Right cardiac atrium (tissue), 5 donors: ENCODE measurements at regions of chr12 and their contacts with region 1.

Region 1: DNA sequence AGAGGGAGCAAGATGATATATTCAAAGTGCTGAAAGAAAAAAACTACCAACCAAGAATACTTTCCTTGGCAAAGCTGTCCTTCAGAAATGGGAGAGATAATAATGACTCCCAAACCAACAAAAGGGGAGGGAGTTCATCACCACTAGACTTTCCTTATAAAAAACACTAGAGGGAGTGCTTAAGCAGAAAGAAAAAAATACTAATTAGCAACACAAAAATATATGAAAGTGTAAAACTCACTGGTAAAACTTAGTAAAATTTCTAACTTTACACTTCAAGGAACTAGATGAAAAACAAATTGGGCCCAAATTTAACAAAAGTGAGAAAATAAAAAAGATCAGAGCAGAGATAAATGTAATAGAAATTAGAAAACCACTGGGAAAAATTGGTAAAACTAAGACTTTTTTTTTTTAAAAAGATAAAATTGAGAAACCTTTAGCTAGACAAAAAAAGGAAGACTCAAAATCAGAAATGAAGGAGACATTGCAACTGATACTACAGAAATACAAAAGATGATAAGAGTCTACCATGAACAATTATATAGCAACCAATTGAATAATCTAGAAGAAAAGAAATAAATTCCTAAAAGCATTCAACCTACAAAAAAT is 60.4 kb upstream of the FAR2 start:
- DNase-seq: no peak
- ATAC-seq: no peak
- H3K4me3 ChIP-seq: no peak overlapping the region
- H3K27ac ChIP-seq: no peak overlapping the region
- H3K4me1 ChIP-seq: no peaks in the 10 kb centered on the region
- H3K27me3 ChIP-seq: no peaks in the 10 kb centered on the region

Region 2: DNA sequence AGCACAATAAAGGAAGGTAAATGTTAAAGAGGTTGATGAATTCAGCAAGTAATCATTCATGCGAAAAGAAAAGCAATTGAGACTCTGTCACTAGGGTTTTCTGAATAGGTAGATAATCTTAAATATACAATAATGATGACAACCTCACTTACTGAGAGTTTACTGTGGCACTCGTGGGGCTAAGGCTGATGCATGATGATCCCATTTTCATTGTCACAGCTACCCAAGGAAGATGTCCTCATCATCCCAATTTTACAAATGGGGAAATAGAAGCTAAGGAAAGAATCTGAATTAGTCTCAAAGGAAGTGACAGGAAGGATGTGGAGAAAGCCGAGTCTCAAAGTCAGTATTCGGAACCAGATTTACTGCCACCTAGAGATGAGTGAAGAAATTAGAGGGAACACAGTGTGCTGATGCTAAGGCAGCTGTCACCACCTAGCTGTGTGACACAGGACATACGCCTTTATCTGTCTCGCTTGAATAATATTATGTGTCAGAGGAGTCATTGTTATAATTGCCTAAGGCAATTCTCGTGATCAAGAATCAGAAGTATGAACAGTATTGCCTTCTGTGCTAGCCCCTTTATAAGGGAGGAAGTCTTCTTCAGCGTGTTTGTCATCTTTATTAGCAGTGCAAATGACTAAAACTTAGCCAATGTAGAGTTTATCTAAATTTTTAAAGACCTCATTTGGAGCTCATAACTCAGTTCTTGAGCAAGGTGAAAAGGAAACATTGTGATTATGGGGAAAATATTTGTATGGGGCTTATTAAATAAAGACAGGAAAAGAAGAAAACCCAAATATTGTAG is 229.0 kb after region 1 on chr12:
- intact Hi-C with region 1: loop called in 1 of 4 experiments (anchors 10 kb)
- DNase-seq: peak in 2 of 3 donors; percentile 49 to 77
- ATAC-seq: peak; percentile 97
- H3K4me3 ChIP-seq: peak overlapping the region; percentile 39
- H3K27ac ChIP-seq: peak overlapping the region; percentile 48
- H3K4me1 ChIP-seq: peaks cover 1% of the 10 kb centered on the region
- H3K27me3 ChIP-seq: no peaks in the 10 kb centered on the region